K562 (cell line): ENCODE measurements at regions of chr17 and their contacts with region 1.

Region 1: GRCh38 chr17:35587074-35587971 is at the start of gene AP2B1:
- DNase-seq: peak; percentile 90 to 99 (median 90)
- ATAC-seq: peak; percentile 90
- H3K4me3 ChIP-seq: peak within 1 kb of the TSS; percentile 83
- H3K27ac ChIP-seq: peak within 1 kb of the TSS; percentile 99
- H3K4me1 ChIP-seq: peaks cover 8 to 9% of the 10 kb centered on the region in 2 experiments; a peak in 4 of 5 replicates
- H3K27me3 ChIP-seq: no peaks in the 10 kb centered on the region
- CTCF ChIP-seq: peak in 1 of 3 experiments; percentile 7; a peak in 1 of 6 replicates
- EP300 ChIP-seq: no peak; the same call in none of the 2 replicates
- POLR2A ChIP-seq: peak; percentile 92
- RAD21 ChIP-seq: no peak; a peak in 1 of 4 replicates
- polyA plus RNA-seq, gene AP2B1: 60.1 to 63.6 TPM

Region 2: DNA sequence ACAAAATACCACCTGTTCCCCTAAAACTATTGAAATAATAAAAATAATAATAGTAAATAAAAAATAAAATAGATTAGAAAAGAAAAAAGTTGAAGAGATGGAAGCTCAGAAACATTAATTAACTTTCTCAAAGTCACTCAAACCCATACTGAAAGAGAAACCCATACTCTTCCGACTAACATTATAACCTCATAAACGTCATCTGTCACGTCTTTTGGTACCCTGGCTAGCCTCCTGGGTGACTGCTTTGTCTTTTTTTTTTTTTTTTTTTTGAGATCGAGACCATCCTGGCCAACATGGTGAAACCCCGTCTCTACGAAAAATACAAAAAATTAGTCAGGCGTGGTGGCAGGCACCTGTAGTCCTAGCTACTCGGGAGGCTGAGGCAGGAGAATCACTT is 57.5 kb before region 1 on chr17:
- CTCF ChIA-PET with region 1: no interaction called
- POLR2A ChIA-PET with region 1: no interaction called
- in situ Hi-C with region 1: no loop called
- intact Hi-C with region 1: no loop called
- DNase-seq: no peak
- ATAC-seq: no peak
- H3K4me3 ChIP-seq: no peak overlapping the region
- H3K27ac ChIP-seq: no peak overlapping the region
- H3K4me1 ChIP-seq: no peaks in the 10 kb centered on the region
- H3K27me3 ChIP-seq: no peaks in the 10 kb centered on the region
- CTCF ChIP-seq: no peak
- EP300 ChIP-seq: no peak
- POLR2A ChIP-seq: no peak
- RAD21 ChIP-seq: no peak

Region 3: GRCh38 chr17:35560703-35561102 is 26.6 kb before region 1 on chr17 and contains the start of gene SLFN14:
- CTCF ChIA-PET with region 1: no interaction called
- POLR2A ChIA-PET with region 1: interaction called, 7 read pairs
- in situ Hi-C with region 1: no loop called
- intact Hi-C with region 1: loop called (anchors 2 kb)
- DNase-seq: peak; percentile 88 to 98 (median 92)
- ATAC-seq: peak; percentile 84
- H3K4me3 ChIP-seq: peak within 1 kb of the TSS; percentile 15; the same call in 1 of the 2 replicates
- H3K27ac ChIP-seq: peak within 1 kb of the TSS; percentile 68
- H3K4me1 ChIP-seq: peaks cover 11 to 45% of the 10 kb centered on the region in 2 experiments
- H3K27me3 ChIP-seq: no peaks in the 10 kb centered on the region
- CTCF ChIP-seq: no peak
- EP300 ChIP-seq: peak; percentile 99
- POLR2A ChIP-seq: peak; percentile 67
- RAD21 ChIP-seq: no peak
- polyA plus RNA-seq, gene SLFN14: 1.6 to 3.1 TPM

Region 4: GRCh38 chr17:35568541-35568940 is 18.8 kb before region 1 on chr17:
- CTCF ChIA-PET with region 1: no interaction called
- POLR2A ChIA-PET with region 1: interaction called, 11 read pairs
- in situ Hi-C with region 1: no loop called
- intact Hi-C with region 1: no loop called
- DNase-seq: peak; percentile 24 to 65 (median 42)
- ATAC-seq: peak; percentile 52
- H3K4me3 ChIP-seq: peak overlapping the region; percentile 93
- H3K27ac ChIP-seq: peak overlapping the region; percentile 96
- H3K4me1 ChIP-seq: peaks cover 15 to 40% of the 10 kb centered on the region in 2 experiments
- H3K27me3 ChIP-seq: no peaks in the 10 kb centered on the region
- CTCF ChIP-seq: no peak
- EP300 ChIP-seq: no peak
- POLR2A ChIP-seq: no peak
- RAD21 ChIP-seq: no peak

Region 5: DNA sequence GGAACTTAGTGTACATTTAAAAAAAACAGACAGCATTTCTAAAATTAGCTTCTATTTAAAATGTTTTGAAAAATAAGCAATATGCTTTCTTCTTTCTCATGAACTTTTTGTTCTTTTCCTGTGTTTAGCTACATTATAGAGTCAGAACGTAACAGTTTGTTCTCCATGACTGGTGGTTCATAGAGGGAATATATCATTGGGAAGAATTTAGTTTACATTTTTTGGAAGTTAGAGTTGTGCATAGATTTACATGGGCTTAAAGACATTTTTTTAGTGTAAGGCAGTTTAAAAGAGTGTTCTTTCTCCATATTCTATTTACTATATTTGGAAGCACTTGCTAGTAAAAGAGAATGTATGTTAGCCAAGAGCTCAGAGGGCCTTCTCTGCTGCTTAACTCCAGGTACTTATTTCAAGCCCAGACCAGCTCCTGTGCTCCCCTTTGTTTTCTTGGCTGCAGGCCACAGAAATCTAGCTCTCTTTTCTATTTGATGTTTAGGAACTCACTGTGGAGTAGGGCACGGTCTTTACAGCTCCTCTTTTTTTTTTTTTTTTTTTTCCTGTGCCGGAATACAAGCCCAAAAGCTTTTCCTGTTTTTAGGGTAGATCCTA is 20.0 kb after region 1 on chr17:
- CTCF ChIA-PET with region 1: no interaction called
- POLR2A ChIA-PET with region 1: interaction called, 18 read pairs
- in situ Hi-C with region 1: no loop called
- intact Hi-C with region 1: no loop called
- DNase-seq: no peak
- ATAC-seq: no peak
- H3K4me3 ChIP-seq: no peak overlapping the region
- H3K27ac ChIP-seq: no peak overlapping the region
- H3K4me1 ChIP-seq: no peaks in the 10 kb centered on the region
- H3K27me3 ChIP-seq: no peaks in the 10 kb centered on the region
- CTCF ChIP-seq: no peak
- EP300 ChIP-seq: no peak
- POLR2A ChIP-seq: no peak
- RAD21 ChIP-seq: no peak

Region 6: GRCh38 chr17:35612924-35613521 is 25.7 kb after region 1 on chr17:
- CTCF ChIA-PET with region 1: no interaction called
- POLR2A ChIA-PET with region 1: interaction called, 11 read pairs
- in situ Hi-C with region 1: no loop called
- intact Hi-C with region 1: no loop called
- DNase-seq: peak in 3 of 4 experiments; percentile 18 to 56 (median 28)
- ATAC-seq: peak; percentile 84
- H3K4me3 ChIP-seq: no peak overlapping the region
- H3K27ac ChIP-seq: no peak overlapping the region
- H3K4me1 ChIP-seq: no peaks in the 10 kb centered on the region
- H3K27me3 ChIP-seq: no peaks in the 10 kb centered on the region
- CTCF ChIP-seq: peak; percentile 29 to 61 (median 58); a peak in 4 of 6 replicates
- EP300 ChIP-seq: no peak
- POLR2A ChIP-seq: no peak
- RAD21 ChIP-seq: peak; percentile 31 to 58; a peak in 3 of 4 replicates

Region 7: DNA sequence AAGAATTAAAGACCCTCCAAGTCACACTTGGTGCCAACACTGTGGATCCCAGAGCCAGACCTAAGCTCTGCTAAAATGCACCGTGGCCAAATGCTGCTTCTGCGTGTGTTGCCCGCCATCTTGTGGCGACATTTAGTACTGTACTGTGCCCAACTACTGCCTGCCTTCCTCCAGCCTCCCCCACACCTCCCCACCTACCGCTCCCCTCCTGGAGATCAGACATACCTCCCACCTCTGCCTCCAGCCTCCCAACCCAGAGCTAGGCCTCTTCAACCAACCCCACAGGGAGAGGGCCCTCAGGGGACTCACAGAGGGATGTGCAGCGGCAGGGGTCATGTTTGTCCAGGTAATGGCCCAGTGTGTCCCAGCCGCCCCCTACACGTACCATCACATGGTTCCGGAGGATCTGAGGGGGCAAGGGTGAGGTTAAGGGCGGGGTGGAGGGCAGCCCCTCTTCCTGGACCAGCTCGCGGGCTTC is 160.3 kb after region 1 on chr17:
- CTCF ChIA-PET with region 1: no interaction called
- POLR2A ChIA-PET with region 1: no interaction called
- in situ Hi-C with region 1: no loop called
- intact Hi-C with region 1: no loop called
- DNase-seq: peak; percentile 78 to 87 (median 83)
- ATAC-seq: peak; percentile 89
- H3K4me3 ChIP-seq: no peak overlapping the region
- H3K27ac ChIP-seq: no peak overlapping the region
- H3K4me1 ChIP-seq: peaks cover 11 to 19% of the 10 kb centered on the region in 2 experiments; a peak in 4 of 5 replicates
- H3K27me3 ChIP-seq: peaks cover 10 to 67% of the 10 kb centered on the region in 2 experiments; a peak in 4 of 5 replicates
- CTCF ChIP-seq: peak; percentile 86 to 90 (median 88)
- EP300 ChIP-seq: no peak
- POLR2A ChIP-seq: no peak
- RAD21 ChIP-seq: peak; percentile 74 to 93